ENCODE measurements at regions of chr13 and their contacts with region 1.

Region 1: GRCh38 chr13:94419304-94419924 is 60.1 kb downstream of the DCT start:
- DNase-seq: peak; percentile 68
- H3K4me3 Mint-ChIP-seq: no peak overlapping the region
- H3K27ac Mint-ChIP-seq: peak overlapping the region; percentile 84
- H3K4me1 Mint-ChIP-seq: peaks cover 27% of the 10 kb centered on the region
- H3K27me3 Mint-ChIP-seq: peaks cover 15% of the 10 kb centered on the region

Region 2: DNA sequence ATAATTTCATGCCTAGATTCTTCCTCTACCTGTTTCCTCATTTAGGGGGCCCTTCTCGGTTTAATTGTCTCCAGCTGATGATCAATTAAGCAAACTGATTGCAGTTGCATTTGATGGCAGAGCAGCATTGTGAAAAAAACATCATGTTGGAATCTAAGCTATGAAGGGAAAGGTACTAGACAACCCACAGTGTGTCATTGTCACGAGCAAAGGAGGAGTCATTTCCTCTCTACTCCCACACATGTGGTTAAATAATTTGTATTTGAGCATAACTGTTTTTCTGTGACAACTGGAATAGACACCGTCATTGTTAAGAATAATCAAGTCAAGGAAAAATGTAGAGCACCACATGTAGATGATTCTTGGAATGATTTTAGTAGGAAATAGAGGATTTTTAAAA is 180.3 kb before region 1 on chr13:
- CTCF ChIA-PET with region 1: no interaction called
- POLR2A ChIA-PET with region 1: no interaction called
- intact Hi-C with region 1: loop called (anchors 1 kb)
- DNase-seq: no peak
- H3K4me3 Mint-ChIP-seq: no peak overlapping the region
- H3K27ac Mint-ChIP-seq: no peak overlapping the region
- H3K4me1 Mint-ChIP-seq: peaks cover 36% of the 10 kb centered on the region
- H3K27me3 Mint-ChIP-seq: no peaks in the 10 kb centered on the region

Region 3: GRCh38 chr13:94351292-94351990 is 68.0 kb before region 1 on chr13:
- CTCF ChIA-PET with region 1: no interaction called
- POLR2A ChIA-PET with region 1: no interaction called
- intact Hi-C with region 1: loop called (anchors 1 kb)
- DNase-seq: peak; percentile 28
- H3K4me3 Mint-ChIP-seq: no peak overlapping the region
- H3K27ac Mint-ChIP-seq: no peak overlapping the region
- H3K4me1 Mint-ChIP-seq: peaks cover 20% of the 10 kb centered on the region
- H3K27me3 Mint-ChIP-seq: peaks cover 2% of the 10 kb centered on the region

Region 4: GRCh38 chr13:94394723-94395122 is 24.7 kb before region 1 on chr13:
- CTCF ChIA-PET with region 1: no interaction called
- POLR2A ChIA-PET with region 1: no interaction called
- intact Hi-C with region 1: no loop called
- DNase-seq: no peak
- H3K4me3 Mint-ChIP-seq: no peak overlapping the region
- H3K27ac Mint-ChIP-seq: no peak overlapping the region
- H3K4me1 Mint-ChIP-seq: no peaks in the 10 kb centered on the region
- H3K27me3 Mint-ChIP-seq: peaks cover 10% of the 10 kb centered on the region

Region 5: DNA sequence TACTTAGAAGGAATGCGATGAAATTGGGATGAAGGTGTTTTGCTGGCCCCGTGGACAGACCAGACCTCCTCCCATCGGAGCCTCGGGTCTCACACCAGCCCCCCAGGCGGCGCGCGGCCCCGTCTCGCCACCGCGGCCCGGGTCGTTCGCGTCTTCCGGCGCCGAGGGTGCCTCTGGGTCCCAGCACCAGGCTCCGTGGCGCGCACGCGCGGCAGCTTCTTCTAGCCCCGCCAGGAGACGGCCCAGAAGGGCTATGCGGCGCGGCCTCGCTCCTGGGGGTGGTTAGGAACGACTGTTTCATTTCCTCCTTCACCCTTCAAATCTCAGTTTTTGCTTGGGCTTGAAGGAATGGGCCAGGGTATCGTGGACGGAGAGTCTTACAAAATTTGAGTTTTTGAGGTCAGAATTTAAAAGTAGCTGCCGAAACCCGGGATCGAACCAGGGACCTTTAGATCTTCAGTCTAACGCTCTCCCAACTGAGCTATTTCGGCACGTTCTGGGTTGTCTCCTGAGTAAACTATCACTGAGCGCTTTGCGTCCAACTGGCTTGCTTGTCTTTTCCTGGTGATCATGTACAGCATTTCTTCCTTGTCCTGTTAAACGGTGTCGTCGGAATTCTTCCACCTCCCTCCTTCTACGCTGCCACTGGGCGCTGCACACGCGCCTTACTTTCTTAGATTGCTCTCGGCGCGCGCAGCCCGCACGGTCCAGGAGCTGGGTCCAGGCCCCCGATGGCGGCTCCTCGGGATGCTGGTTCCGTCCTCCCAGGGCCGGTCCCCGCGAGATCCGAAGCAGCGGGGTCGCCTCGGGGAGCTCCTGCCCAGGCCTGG is 130.0 kb after region 1 on chr13:
- CTCF ChIA-PET with region 1: no interaction called
- POLR2A ChIA-PET with region 1: no interaction called
- intact Hi-C with region 1: loop called (anchors 1 kb)
- DNase-seq: peak; percentile 93
- H3K4me3 Mint-ChIP-seq: peak overlapping the region; percentile 88
- H3K27ac Mint-ChIP-seq: peak overlapping the region; percentile 94
- H3K4me1 Mint-ChIP-seq: peaks cover 11% of the 10 kb centered on the region
- H3K27me3 Mint-ChIP-seq: peaks cover 2% of the 10 kb centered on the region

Region 6: DNA sequence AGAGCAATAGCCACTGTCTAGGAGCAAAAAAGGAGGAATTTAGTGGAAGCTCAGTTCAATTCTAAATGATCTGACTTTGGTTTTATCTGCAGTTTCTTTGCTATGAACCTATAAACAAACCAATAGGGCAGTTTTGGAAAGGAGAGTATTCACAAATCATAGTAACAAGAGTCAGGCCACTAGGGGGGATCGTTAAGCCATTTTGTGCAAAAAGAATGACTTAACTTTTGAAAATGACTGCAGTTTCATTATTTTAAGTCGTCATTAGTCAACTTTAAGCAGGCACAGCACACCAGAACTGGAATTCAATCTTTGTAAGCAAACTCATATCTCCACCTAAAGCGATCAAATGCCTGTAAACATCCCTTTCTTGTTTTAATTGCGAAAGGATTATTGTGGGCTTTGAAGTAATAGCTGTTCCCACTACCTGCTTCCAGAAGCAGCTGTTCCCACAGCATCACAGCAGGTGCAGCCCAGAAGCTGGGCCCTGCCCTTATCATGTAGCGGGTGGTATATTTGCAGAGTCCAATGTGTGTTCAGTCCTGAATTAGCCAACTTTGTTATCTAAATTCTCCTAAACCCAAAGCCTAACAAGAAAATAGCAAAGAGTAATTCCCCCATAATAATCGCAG is 241.4 kb after region 1 on chr13:
- CTCF ChIA-PET with region 1: no interaction called
- POLR2A ChIA-PET with region 1: no interaction called
- intact Hi-C with region 1: loop called (anchors 1 kb)
- DNase-seq: no peak
- H3K4me3 Mint-ChIP-seq: no peak overlapping the region
- H3K27ac Mint-ChIP-seq: no peak overlapping the region
- H3K4me1 Mint-ChIP-seq: peaks cover 23% of the 10 kb centered on the region
- H3K27me3 Mint-ChIP-seq: peaks cover 23% of the 10 kb centered on the region

Region 7: GRCh38 chr13:95050800-95051615 is 631.6 kb after region 1 on chr13:
- CTCF ChIA-PET with region 1: no interaction called
- POLR2A ChIA-PET with region 1: no interaction called
- intact Hi-C with region 1: loop called (anchors 1 kb)
- DNase-seq: peak; percentile 41
- H3K4me3 Mint-ChIP-seq: no peak overlapping the region
- H3K27ac Mint-ChIP-seq: peak overlapping the region; percentile 56
- H3K4me1 Mint-ChIP-seq: peaks cover 19% of the 10 kb centered on the region
- H3K27me3 Mint-ChIP-seq: no peaks in the 10 kb centered on the region

Measured in activated CD4-positive, alpha-beta memory T cell treated with anti-CD3 and anti-CD28 coated beads for 36 hours (primary cell).